Left ventricle myocardium inferior (tissue), 1 donor: ENCODE measurements at regions of chr16 and their contacts with region 1.

Region 1: GRCh38 chr16:83513008-83513755 is 294.6 kb upstream of the HSBP1 start:
- DNase-seq: no peak
- H3K4me3 ChIP-seq: no peak overlapping the region
- H3K27ac ChIP-seq: no peak overlapping the region
- H3K4me1 ChIP-seq: no peaks in the 10 kb centered on the region
- H3K27me3 ChIP-seq: no peaks in the 10 kb centered on the region
- CTCF ChIP-seq: no peak

Region 2: DNA sequence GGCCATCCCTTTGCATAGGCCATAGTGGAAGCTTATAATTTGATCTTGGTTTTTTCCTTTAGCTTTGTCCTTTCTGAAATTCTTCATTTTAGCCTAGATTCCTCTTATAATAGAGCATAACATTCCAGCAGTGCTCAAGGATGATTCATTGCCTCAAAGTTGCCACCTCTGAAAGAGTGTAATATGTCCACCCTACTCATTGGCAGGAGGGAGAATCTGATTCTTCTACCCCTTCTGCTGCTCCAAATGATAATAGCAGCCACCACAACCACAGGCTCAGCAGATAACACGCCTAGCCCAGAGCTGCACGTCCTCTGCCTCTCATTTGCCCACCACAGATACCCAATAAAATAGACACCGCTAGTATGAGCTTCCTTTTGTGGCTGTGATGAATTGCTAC is 42.8 kb before region 1 on chr16:
- intact Hi-C with region 1: no loop called
- DNase-seq: no peak
- H3K4me3 ChIP-seq: no peak overlapping the region
- H3K27ac ChIP-seq: no peak overlapping the region
- H3K4me1 ChIP-seq: peaks cover 14% of the 10 kb centered on the region
- H3K27me3 ChIP-seq: no peaks in the 10 kb centered on the region
- CTCF ChIP-seq: no peak

Region 3: GRCh38 chr16:83581082-83581481 is 67.9 kb after region 1 on chr16:
- intact Hi-C with region 1: loop called (anchors 10 kb)
- DNase-seq: no peak
- H3K4me3 ChIP-seq: no peak overlapping the region
- H3K27ac ChIP-seq: no peak overlapping the region
- H3K4me1 ChIP-seq: no peaks in the 10 kb centered on the region
- H3K27me3 ChIP-seq: no peaks in the 10 kb centered on the region
- CTCF ChIP-seq: no peak